T-cell (primary cell): ENCODE measurements at regions of chr15 and their contacts with region 1.

Region 1: GRCh38 chr15:88894348-88894818 is 961 bp downstream of the HAPLN3 start:
- DNase-seq: peak; percentile 68 to 92 (median 84)
- ATAC-seq: peak; percentile 67 to 70 (median 67)
- H3K4me3 ChIP-seq: peak overlapping the region; percentile 85 to 86
- H3K4me3 Mint-ChIP-seq: peak overlapping the region; percentile 81 to 88 (median 87)
- H3K27ac ChIP-seq: no peak overlapping the region
- H3K27ac Mint-ChIP-seq: peak overlapping the region; percentile 55 to 88
- H3K4me1 ChIP-seq: peaks cover 25 to 43% of the 10 kb centered on the region in 2 experiments
- H3K4me1 Mint-ChIP-seq: peaks cover 43 to 50% (median 47%) of the 10 kb centered on the region in 3 donors
- H3K27me3 ChIP-seq: peaks cover 0 to 19% of the 10 kb centered on the region in 2 experiments
- H3K27me3 Mint-ChIP-seq: peaks cover 0 to 1% of the 10 kb centered on the region in 2 donors

Region 2: GRCh38 chr15:88904624-88905327 is 10.4 kb after region 1 on chr15:
- CTCF ChIA-PET with region 1: interaction called, 5 to 44 read pairs
- POLR2A ChIA-PET with region 1: no interaction called
- DNase-seq: peak; percentile 87 to 98 (median 95)
- ATAC-seq: peak; percentile 98 to 100 (median 98)
- H3K4me3 ChIP-seq: peak overlapping the region in 1 of 2 donors; percentile 35
- H3K4me3 Mint-ChIP-seq: peak overlapping the region in 2 of 3 donors; percentile 47 to 73
- H3K27ac ChIP-seq: peak overlapping the region; percentile 82
- H3K27ac Mint-ChIP-seq: peak overlapping the region; percentile 98 to 99
- H3K4me1 ChIP-seq: peaks cover 18 to 41% of the 10 kb centered on the region in 2 experiments
- H3K4me1 Mint-ChIP-seq: peaks cover 38 to 53% (median 52%) of the 10 kb centered on the region in 3 donors
- H3K27me3 ChIP-seq: no peaks in the 10 kb centered on the region
- H3K27me3 Mint-ChIP-seq: no peaks in the 10 kb centered on the region